Calu3 (cell line): ENCODE measurements at regions of chr16 and their contacts with region 1.

Region 1: GRCh38 chr16:26930786-26931581 is 135.7 kb upstream of the C16orf82 start:
- DNase-seq: no peak
- H3K4me3 Mint-ChIP-seq: no peak overlapping the region
- H3K27ac Mint-ChIP-seq: no peak overlapping the region
- H3K4me1 Mint-ChIP-seq: no peaks in the 10 kb centered on the region
- H3K27me3 Mint-ChIP-seq: peaks cover 8% of the 10 kb centered on the region
- CTCF ChIP-seq: no peak

Region 2: GRCh38 chr16:26169473-26169872 is 761.5 kb before region 1 on chr16:
- CTCF ChIA-PET with region 1: no interaction called
- intact Hi-C with region 1: no loop called
- DNase-seq: no peak
- H3K4me3 Mint-ChIP-seq: no peak overlapping the region
- H3K27ac Mint-ChIP-seq: no peak overlapping the region
- H3K4me1 Mint-ChIP-seq: no peaks in the 10 kb centered on the region
- H3K27me3 Mint-ChIP-seq: no peaks in the 10 kb centered on the region
- CTCF ChIP-seq: no peak

Region 3: DNA sequence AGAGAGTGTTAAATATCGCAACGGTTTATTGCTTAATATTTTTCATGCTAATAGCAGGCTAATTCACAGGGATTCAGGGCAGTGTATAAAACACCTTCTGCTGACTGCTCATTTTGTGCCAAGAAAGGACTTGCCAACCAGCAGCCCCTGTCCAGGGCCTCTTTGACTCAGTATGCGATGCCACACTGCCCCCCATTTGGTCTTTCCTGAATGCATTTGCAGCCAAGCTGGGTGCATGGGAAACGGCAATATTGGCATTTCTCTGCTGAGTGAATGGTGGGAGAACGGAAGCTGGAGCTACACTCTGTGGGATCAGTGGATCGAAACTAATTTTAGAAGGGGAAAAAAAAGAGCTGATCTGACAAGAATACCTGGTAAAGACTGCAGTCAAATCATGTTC is 17.1 kb before region 1 on chr16:
- CTCF ChIA-PET with region 1: no interaction called
- intact Hi-C with region 1: no loop called
- DNase-seq: no peak
- H3K4me3 Mint-ChIP-seq: no peak overlapping the region
- H3K27ac Mint-ChIP-seq: no peak overlapping the region
- H3K4me1 Mint-ChIP-seq: no peaks in the 10 kb centered on the region
- H3K27me3 Mint-ChIP-seq: no peaks in the 10 kb centered on the region
- CTCF ChIP-seq: no peak

Region 4: GRCh38 chr16:27080870-27081269 is 149.9 kb after region 1 on chr16:
- CTCF ChIA-PET with region 1: no interaction called
- intact Hi-C with region 1: loop called (anchors 10 kb)
- DNase-seq: peak; percentile 13
- H3K4me3 Mint-ChIP-seq: no peak overlapping the region
- H3K27ac Mint-ChIP-seq: no peak overlapping the region
- H3K4me1 Mint-ChIP-seq: no peaks in the 10 kb centered on the region
- H3K27me3 Mint-ChIP-seq: peaks cover 91% of the 10 kb centered on the region
- CTCF ChIP-seq: peak; percentile 49

Region 5: DNA sequence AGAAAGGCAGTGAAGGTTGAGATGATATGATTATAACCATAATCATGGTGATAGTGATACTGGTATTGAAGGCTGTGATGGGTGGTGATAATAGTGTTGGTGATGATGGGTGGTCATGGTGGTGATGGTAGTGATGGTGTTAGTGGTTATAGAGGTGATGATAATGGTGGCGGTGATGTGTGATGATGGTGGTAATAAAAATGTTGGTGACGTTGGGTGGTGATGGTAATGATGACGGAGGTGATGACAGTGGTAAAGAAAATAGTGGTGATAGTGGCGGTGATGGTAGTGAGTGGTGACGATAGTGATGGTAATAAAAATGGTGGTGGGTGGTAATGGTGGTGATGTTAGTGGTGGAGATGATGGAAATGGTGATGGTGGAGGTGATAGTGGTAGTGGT is 207.3 kb after region 1 on chr16:
- CTCF ChIA-PET with region 1: no interaction called
- intact Hi-C with region 1: no loop called
- DNase-seq: no peak
- H3K4me3 Mint-ChIP-seq: no peak overlapping the region
- H3K27ac Mint-ChIP-seq: no peak overlapping the region
- H3K4me1 Mint-ChIP-seq: no peaks in the 10 kb centered on the region
- H3K27me3 Mint-ChIP-seq: peaks cover 40% of the 10 kb centered on the region
- CTCF ChIP-seq: no peak